ENCODE measurements at regions of chr19 and their contacts with region 1.

Region 1: GRCh38 chr19:9309139-9309973 is at the start of gene ZNF699:
- DNase-seq: peak; percentile 96 to 99 (median 97)
- H3K4me3 ChIP-seq: peak within 1 kb of the TSS; percentile 55 to 93 (median 83)
- H3K4me3 Mint-ChIP-seq: peak within 1 kb of the TSS; percentile 97 to 98
- H3K27ac ChIP-seq: peak within 1 kb of the TSS; percentile 58 to 96
- H3K27ac Mint-ChIP-seq: peak within 1 kb of the TSS; percentile 96 to 99 (median 98)
- H3K4me1 ChIP-seq: peaks cover 13 to 18% of the 10 kb centered on the region in 2 donors
- H3K4me1 Mint-ChIP-seq: peaks cover 19% of the 10 kb centered on the region
- H3K27me3 ChIP-seq: no peaks in the 10 kb centered on the region
- H3K27me3 Mint-ChIP-seq: peaks cover 1 to 4% (median 2%) of the 10 kb centered on the region in 3 donors
- CTCF ChIP-seq: no peak
- polyA plus RNA-seq, gene ZNF699: 3.4 to 18.5 (median 5.6) TPM

Region 2: DNA sequence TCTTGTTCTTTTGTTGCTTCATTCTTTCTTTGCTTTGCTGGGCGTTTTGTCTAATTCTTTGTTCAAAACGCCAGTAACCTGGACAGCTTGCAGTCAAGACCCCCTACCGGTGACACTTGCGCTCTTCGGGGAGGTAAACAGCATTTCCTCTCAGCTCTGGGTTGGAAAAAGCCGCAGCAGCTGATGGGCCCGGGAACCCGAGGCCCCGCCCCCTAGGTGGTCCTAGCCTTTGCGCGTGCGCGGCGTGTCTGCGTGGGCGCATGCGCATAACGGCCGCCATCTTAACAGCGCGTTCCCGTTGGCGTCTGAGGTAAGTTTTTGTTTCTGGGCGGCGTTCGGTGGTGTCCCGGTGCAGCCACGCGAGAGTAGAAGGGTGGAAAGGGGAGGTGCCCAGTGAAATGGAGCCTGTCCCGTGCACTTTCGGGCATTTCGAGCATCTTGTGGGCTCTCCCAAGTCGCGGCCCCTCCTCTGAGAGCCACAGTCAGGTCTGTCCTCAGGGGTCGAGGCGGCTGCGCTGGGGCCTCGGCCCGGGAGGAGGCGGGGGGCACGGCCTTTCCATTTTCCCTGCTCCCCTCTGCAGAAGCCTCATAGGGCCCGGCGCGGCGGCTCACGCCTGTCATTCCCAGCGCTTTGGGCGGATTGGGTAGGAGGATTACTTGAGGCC is 14.7 kb after region 1 on chr19 and contains the start of gene ZNF559:
- intact Hi-C with region 1: loop called (anchors 1 to 2 kb)
- DNase-seq: peak; percentile 93 to 95 (median 93)
- H3K4me3 ChIP-seq: peak within 1 kb of the TSS; percentile 73 to 90 (median 89)
- H3K4me3 Mint-ChIP-seq: peak within 1 kb of the TSS; percentile 92 to 98
- H3K27ac ChIP-seq: peak within 1 kb of the TSS; percentile 82 to 89
- H3K27ac Mint-ChIP-seq: peak within 1 kb of the TSS; percentile 89 to 96 (median 94)
- H3K4me1 ChIP-seq: peaks cover 14 to 20% of the 10 kb centered on the region in 2 donors
- H3K4me1 Mint-ChIP-seq: peaks cover 10% of the 10 kb centered on the region
- H3K27me3 ChIP-seq: no peaks in the 10 kb centered on the region
- H3K27me3 Mint-ChIP-seq: peaks cover 0 to 3% (median 2%) of the 10 kb centered on the region in 3 donors
- CTCF ChIP-seq: peak; percentile 37
- polyA plus RNA-seq, gene ZNF559: 9.0 to 16.0 (median 9.1) TPM

Measured in CD14-positive monocyte (primary cell).